GM12878 (cell line): ENCODE measurements at regions of chr7 and their contacts with region 1.

Region 1: DNA sequence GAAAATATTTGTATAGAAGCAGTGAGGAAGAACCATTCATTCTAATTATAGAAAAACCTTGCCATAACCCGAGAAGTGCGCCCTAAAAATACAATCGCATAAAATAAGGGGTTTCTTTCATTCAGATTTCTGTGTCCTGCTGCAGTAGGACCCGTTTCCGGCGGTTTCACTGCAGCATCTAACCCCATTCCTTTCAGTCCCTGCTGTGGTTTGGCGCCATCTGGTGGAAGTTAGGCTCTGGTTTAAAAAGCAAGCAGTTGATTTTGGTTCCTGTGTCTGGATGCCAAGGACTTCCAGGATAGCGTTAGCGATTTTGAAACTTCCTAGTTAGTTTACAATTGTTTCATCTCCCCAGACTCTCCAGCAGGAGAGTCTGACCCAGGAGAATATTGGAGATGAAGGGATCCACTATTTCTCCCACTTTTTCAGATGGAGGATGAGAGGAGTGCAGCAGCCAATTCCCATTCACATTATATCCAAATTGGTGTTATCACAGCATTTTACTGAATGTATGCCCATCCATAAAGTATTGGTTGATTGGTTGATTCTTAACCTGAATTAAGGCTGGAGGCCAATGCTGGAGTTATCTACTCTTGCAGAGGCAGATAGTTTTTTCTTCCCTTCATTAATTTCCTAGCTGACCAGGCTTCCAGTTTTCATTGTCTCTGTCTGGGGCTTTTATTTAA is 128.8 kb upstream of the CACNA2D1 start:
- DNase-seq: peak; percentile 11
- ATAC-seq: peak; percentile 77
- H3K4me3 ChIP-seq: no peak overlapping the region
- H3K27ac ChIP-seq: no peak overlapping the region
- H3K4me1 ChIP-seq: no peaks in the 10 kb centered on the region
- H3K27me3 ChIP-seq: no peaks in the 10 kb centered on the region
- CTCF ChIP-seq: peak; percentile 79 to 89 (median 85)
- EP300 ChIP-seq: no peak
- POLR2A ChIP-seq: no peak
- RAD21 ChIP-seq: peak; percentile 92

Region 2: DNA sequence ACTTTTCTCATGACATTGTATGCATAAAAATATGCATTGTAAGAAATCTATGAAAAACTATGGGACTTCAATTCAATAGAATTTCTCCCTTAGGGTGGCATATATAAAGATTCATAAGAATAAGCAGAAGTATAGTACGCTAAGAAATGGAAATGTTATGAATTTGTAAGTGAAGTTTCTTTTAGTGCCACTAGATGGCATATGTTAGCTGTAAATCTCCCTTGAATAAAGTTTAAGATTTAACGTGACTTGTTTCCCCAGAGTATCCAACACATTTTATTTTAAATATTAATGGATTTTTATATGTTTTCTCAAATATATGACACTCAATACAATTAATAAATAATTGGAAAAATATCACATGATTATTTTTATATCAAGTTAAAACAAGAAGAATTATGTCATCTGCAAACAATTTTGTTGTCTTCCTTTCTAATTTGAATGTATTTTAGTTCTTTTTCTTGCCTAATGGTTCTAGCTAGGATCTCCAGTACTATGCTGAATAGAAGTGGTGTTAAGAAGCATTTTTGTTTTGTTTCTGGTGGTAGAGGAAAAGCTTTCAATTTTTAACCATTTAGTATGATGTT is 1089.6 kb before region 1 on chr7:
- CTCF ChIA-PET with region 1: interaction called, 3 read pairs
- POLR2A ChIA-PET with region 1: no interaction called
- RAD21 ChIA-PET with region 1: no interaction called
- SMC1A ChIA-PET with region 1: interaction called, 3 read pairs
- in situ Hi-C with region 1: loop called (anchors 10 kb)
- intact Hi-C with region 1: loop called (anchors 5 kb)
- DNase-seq: no peak
- ATAC-seq: peak; percentile 65
- H3K4me3 ChIP-seq: no peak overlapping the region
- H3K27ac ChIP-seq: no peak overlapping the region
- H3K4me1 ChIP-seq: no peaks in the 10 kb centered on the region
- H3K27me3 ChIP-seq: no peaks in the 10 kb centered on the region
- CTCF ChIP-seq: peak; percentile 36 to 58 (median 43); a peak in 4 of 6 replicates
- EP300 ChIP-seq: no peak
- POLR2A ChIP-seq: no peak
- RAD21 ChIP-seq: peak; percentile 53; the same call in 1 of the 2 replicates

Region 3: GRCh38 chr7:81993186-81993585 is 579.2 kb before region 1 on chr7:
- CTCF ChIA-PET with region 1: no interaction called
- POLR2A ChIA-PET with region 1: no interaction called
- RAD21 ChIA-PET with region 1: no interaction called
- SMC1A ChIA-PET with region 1: no interaction called
- in situ Hi-C with region 1: no loop called
- intact Hi-C with region 1: no loop called
- DNase-seq: no peak
- ATAC-seq: no peak
- H3K4me3 ChIP-seq: no peak overlapping the region
- H3K27ac ChIP-seq: no peak overlapping the region
- H3K4me1 ChIP-seq: no peaks in the 10 kb centered on the region
- H3K27me3 ChIP-seq: no peaks in the 10 kb centered on the region
- CTCF ChIP-seq: no peak
- EP300 ChIP-seq: no peak
- POLR2A ChIP-seq: no peak
- RAD21 ChIP-seq: no peak

Region 4: GRCh38 chr7:82172017-82172416 is 400.3 kb before region 1 on chr7:
- CTCF ChIA-PET with region 1: interaction called, 11 read pairs
- POLR2A ChIA-PET with region 1: interaction called, 6 read pairs
- RAD21 ChIA-PET with region 1: interaction called, 14 read pairs
- SMC1A ChIA-PET with region 1: interaction called, 20 read pairs
- in situ Hi-C with region 1: no loop called
- intact Hi-C with region 1: loop called (anchors 5 kb)
- DNase-seq: no peak
- ATAC-seq: peak; percentile 64
- H3K4me3 ChIP-seq: no peak overlapping the region
- H3K27ac ChIP-seq: no peak overlapping the region
- H3K4me1 ChIP-seq: no peaks in the 10 kb centered on the region
- H3K27me3 ChIP-seq: no peaks in the 10 kb centered on the region
- CTCF ChIP-seq: peak in 1 of 3 experiments; percentile 5; a peak in 2 of 6 replicates
- EP300 ChIP-seq: no peak
- POLR2A ChIP-seq: no peak
- RAD21 ChIP-seq: peak; percentile 36; the same call in 1 of the 2 replicates

Region 5: DNA sequence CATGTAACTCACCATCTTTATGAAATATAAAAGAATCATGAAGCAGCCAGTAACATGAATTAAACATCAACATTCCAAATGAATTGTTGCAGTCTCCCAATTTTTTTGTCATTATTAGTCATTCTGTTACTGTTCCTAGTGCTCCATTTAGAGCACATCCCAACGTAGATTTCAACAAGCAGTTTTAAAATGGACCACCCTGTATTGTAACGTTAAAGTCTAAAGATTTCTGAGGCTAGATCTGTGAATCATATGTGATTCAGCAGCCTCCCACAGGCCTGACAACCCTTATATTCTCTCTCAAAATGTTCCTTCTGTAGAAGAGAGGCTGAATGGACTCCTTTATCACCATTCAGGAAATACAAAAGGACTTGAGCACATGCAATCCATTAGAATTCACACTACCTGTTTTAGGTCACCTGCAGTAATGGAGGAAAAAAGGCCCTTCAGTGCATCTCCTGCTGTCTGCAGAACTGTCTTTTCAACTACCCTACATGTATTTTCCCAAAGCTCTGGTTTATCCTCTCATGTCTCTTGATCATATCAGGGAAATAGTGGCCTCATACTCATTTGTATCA is 210.1 kb before region 1 on chr7:
- CTCF ChIA-PET with region 1: interaction called, 3 read pairs
- POLR2A ChIA-PET with region 1: no interaction called
- RAD21 ChIA-PET with region 1: interaction called, 11 read pairs
- SMC1A ChIA-PET with region 1: interaction called, 5 read pairs
- in situ Hi-C with region 1: no loop called
- intact Hi-C with region 1: no loop called
- DNase-seq: no peak
- ATAC-seq: no peak
- H3K4me3 ChIP-seq: no peak overlapping the region
- H3K27ac ChIP-seq: no peak overlapping the region
- H3K4me1 ChIP-seq: no peaks in the 10 kb centered on the region
- H3K27me3 ChIP-seq: no peaks in the 10 kb centered on the region
- CTCF ChIP-seq: no peak
- EP300 ChIP-seq: no peak
- POLR2A ChIP-seq: no peak
- RAD21 ChIP-seq: no peak

Region 6: GRCh38 chr7:82506702-82507101 is 65.6 kb before region 1 on chr7:
- CTCF ChIA-PET with region 1: interaction called, 6 read pairs
- POLR2A ChIA-PET with region 1: no interaction called
- RAD21 ChIA-PET with region 1: interaction called, 11 read pairs
- SMC1A ChIA-PET with region 1: interaction called, 15 read pairs
- in situ Hi-C with region 1: no loop called
- intact Hi-C with region 1: no loop called
- DNase-seq: no peak
- ATAC-seq: peak; percentile 36
- H3K4me3 ChIP-seq: no peak overlapping the region
- H3K27ac ChIP-seq: no peak overlapping the region
- H3K4me1 ChIP-seq: no peaks in the 10 kb centered on the region
- H3K27me3 ChIP-seq: no peaks in the 10 kb centered on the region
- CTCF ChIP-seq: no peak
- EP300 ChIP-seq: no peak
- POLR2A ChIP-seq: no peak
- RAD21 ChIP-seq: no peak

Region 7: GRCh38 chr7:82605247-82605872 is 33.0 kb after region 1 on chr7:
- CTCF ChIA-PET with region 1: interaction called, 14 read pairs
- POLR2A ChIA-PET with region 1: no interaction called
- RAD21 ChIA-PET with region 1: interaction called, 9 read pairs
- SMC1A ChIA-PET with region 1: interaction called, 18 read pairs
- in situ Hi-C with region 1: no loop called
- intact Hi-C with region 1: no loop called
- DNase-seq: no peak
- ATAC-seq: peak; percentile 59; the same call in 2 of the 3 replicates
- H3K4me3 ChIP-seq: no peak overlapping the region
- H3K27ac ChIP-seq: no peak overlapping the region
- H3K4me1 ChIP-seq: no peaks in the 10 kb centered on the region
- H3K27me3 ChIP-seq: no peaks in the 10 kb centered on the region
- CTCF ChIP-seq: peak; percentile 52 to 70 (median 67)
- EP300 ChIP-seq: no peak
- POLR2A ChIP-seq: no peak
- RAD21 ChIP-seq: peak; percentile 73